GM12878 (cell line): ENCODE measurements at regions of chr3 and their contacts with region 1.

Region 1: GRCh38 chr3:94062431-94063404 is at the starts of genes DHFR2 and NSUN3:
- DNase-seq: peak; percentile 95
- ATAC-seq: peak; percentile 92
- H3K4me3 ChIP-seq: peak within 1 kb of the TSS; percentile 84
- H3K27ac ChIP-seq: peak within 1 kb of the TSS; percentile 100
- H3K4me1 ChIP-seq: no peaks in the 10 kb centered on the region
- H3K27me3 ChIP-seq: no peaks in the 10 kb centered on the region
- CTCF ChIP-seq: no peak
- EP300 ChIP-seq: no peak
- POLR2A ChIP-seq: peak; percentile 78
- RAD21 ChIP-seq: no peak
- polyA plus RNA-seq, gene DHFR2: 1.8 to 2.7 TPM
- polyA plus RNA-seq, gene NSUN3: 9.1 to 10.4 TPM

Region 2: GRCh38 chr3:94004301-94004910 is 58.3 kb before region 1 on chr3:
- CTCF ChIA-PET with region 1: interaction called, 164 read pairs
- POLR2A ChIA-PET with region 1: interaction called, 3 read pairs
- RAD21 ChIA-PET with region 1: interaction called, 12 read pairs
- SMC1A ChIA-PET with region 1: interaction called, 11 read pairs
- in situ Hi-C with region 1: loop called (anchors 5 kb)
- intact Hi-C with region 1: loop called (anchors 1 kb)
- DNase-seq: peak; percentile 44
- ATAC-seq: peak; percentile 92
- H3K4me3 ChIP-seq: no peak overlapping the region
- H3K27ac ChIP-seq: no peak overlapping the region; the same call in 1 of the 2 replicates
- H3K4me1 ChIP-seq: no peaks in the 10 kb centered on the region
- H3K27me3 ChIP-seq: no peaks in the 10 kb centered on the region
- CTCF ChIP-seq: peak; percentile 78 to 90 (median 84)
- EP300 ChIP-seq: no peak
- POLR2A ChIP-seq: no peak
- RAD21 ChIP-seq: peak; percentile 95

Region 3: DNA sequence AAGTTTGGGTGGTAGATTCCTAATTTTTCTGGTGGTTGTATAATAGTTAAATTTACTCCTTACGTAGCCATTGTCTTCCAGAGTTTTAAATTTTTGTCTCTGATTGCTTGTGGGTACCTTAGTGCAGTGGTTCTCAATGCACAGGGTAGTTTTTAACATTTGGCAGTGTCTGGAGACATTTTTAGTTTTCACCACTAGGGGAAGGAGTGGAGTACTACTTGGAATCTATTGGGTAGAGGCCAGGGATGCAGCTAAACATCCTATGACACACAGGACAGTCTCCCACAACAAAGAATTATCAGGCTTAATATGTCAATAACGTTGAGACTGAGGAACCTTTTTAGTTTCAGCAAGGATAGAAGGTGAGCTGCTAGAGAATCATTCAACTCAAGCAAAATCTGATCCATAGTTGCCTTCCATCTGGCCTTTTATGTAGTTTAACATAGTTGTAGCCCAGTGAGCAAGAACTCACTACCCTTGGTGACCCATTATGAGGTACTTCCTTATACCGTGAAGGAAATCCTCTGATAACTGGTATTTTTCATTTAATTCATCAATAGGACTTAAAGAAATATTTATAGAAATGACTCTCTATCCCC is 25.7 kb before region 1 on chr3:
- CTCF ChIA-PET with region 1: interaction called, 31 read pairs
- POLR2A ChIA-PET with region 1: interaction called, 3 read pairs
- RAD21 ChIA-PET with region 1: interaction called, 7 read pairs
- SMC1A ChIA-PET with region 1: interaction called, 4 read pairs
- in situ Hi-C with region 1: no loop called
- intact Hi-C with region 1: no loop called
- DNase-seq: no peak
- ATAC-seq: peak; percentile 92
- H3K4me3 ChIP-seq: no peak overlapping the region
- H3K27ac ChIP-seq: no peak overlapping the region
- H3K4me1 ChIP-seq: no peaks in the 10 kb centered on the region
- H3K27me3 ChIP-seq: no peaks in the 10 kb centered on the region
- CTCF ChIP-seq: peak; percentile 43 to 59 (median 50)
- EP300 ChIP-seq: no peak
- POLR2A ChIP-seq: no peak
- RAD21 ChIP-seq: 0 out of 2 replicates have a peak, but pooled peaks have one; percentile 15